Testis (tissue), 5 donors: ENCODE measurements at regions of chr12 and their contacts with region 1.

Region 1: DNA sequence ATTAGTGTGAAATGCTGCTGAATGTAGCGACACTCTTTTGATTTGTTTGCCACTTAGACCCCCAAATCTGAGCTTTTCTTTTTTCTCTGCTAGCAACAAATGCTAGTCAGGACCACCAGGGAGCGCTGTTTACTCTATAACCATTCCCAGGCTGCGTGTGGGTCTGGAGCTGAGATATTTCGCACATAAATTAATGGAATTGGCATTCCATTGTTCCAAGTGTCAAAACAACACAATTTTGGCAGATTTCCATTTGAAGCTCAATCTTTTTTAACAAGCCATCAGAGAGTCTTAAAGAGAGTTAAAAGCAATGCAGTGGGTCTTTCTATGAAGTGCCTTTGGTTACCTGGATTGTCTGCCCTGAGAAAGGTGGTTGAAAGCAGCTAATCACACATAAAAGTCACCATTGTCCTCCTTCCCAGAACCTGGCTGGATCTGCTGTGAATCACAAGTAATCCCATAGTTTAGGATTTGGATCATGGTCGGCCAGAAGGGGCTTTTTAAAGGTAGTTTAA is 7.4 kb upstream of the TMEM132C start:
- DNase-seq: peak; percentile 76
- H3K4me3 ChIP-seq: no peak overlapping the region
- H3K27ac ChIP-seq: no peak overlapping the region
- H3K4me1 ChIP-seq: peaks cover 4% of the 10 kb centered on the region
- H3K27me3 ChIP-seq: no peaks in the 10 kb centered on the region
- CTCF ChIP-seq: peak; percentile 76 to 84 (median 80)
- POLR2A ChIP-seq: no peak

Region 2: DNA sequence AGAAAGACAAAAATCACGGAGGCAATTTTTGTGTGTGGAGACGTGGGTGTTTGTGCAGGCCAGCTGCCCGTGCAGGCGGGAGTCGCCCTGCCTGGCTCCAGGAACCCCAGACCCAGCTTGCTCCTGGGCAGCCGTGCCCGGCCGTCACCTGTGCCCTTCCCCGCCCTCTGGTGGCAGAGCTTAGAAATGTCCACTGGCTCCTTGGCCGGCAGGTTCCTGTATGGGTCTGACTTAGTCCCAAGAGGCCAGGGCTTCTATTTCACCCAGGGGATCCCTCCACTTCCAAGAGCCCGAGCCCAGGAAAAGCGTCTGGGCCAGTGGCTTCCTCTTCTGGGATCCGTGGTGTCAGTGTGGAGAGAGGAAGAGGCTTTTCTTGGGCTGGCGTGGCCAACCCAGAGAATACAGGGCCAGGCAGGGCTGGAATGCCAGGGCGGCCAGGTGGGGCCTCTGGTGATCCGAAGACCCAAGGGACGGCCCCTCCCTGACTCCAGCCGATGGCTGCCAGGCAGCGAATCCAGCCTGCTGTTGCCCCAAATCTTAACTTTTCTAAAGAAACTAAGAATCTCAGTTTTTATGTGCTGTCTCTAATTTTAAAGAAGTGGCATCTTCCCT is 128.3 kb after region 1 on chr12:
- intact Hi-C with region 1: loop called (anchors 10 kb)
- DNase-seq: peak; percentile 73
- H3K4me3 ChIP-seq: no peak overlapping the region
- H3K27ac ChIP-seq: peak overlapping the region; percentile 5 to 39
- H3K4me1 ChIP-seq: peaks cover 9% of the 10 kb centered on the region
- H3K27me3 ChIP-seq: no peaks in the 10 kb centered on the region
- CTCF ChIP-seq: peak; percentile 53 to 64 (median 56)
- POLR2A ChIP-seq: no peak

Region 3: GRCh38 chr12:128418944-128419343 is 159.3 kb after region 1 on chr12:
- intact Hi-C with region 1: no loop called
- DNase-seq: no peak
- H3K4me3 ChIP-seq: no peak overlapping the region
- H3K27ac ChIP-seq: no peak overlapping the region
- H3K4me1 ChIP-seq: no peaks in the 10 kb centered on the region
- H3K27me3 ChIP-seq: no peaks in the 10 kb centered on the region
- CTCF ChIP-seq: no peak
- POLR2A ChIP-seq: no peak